HepG2 (cell line): ENCODE measurements at regions of chr18 and their contacts with region 1.

Region 1: DNA sequence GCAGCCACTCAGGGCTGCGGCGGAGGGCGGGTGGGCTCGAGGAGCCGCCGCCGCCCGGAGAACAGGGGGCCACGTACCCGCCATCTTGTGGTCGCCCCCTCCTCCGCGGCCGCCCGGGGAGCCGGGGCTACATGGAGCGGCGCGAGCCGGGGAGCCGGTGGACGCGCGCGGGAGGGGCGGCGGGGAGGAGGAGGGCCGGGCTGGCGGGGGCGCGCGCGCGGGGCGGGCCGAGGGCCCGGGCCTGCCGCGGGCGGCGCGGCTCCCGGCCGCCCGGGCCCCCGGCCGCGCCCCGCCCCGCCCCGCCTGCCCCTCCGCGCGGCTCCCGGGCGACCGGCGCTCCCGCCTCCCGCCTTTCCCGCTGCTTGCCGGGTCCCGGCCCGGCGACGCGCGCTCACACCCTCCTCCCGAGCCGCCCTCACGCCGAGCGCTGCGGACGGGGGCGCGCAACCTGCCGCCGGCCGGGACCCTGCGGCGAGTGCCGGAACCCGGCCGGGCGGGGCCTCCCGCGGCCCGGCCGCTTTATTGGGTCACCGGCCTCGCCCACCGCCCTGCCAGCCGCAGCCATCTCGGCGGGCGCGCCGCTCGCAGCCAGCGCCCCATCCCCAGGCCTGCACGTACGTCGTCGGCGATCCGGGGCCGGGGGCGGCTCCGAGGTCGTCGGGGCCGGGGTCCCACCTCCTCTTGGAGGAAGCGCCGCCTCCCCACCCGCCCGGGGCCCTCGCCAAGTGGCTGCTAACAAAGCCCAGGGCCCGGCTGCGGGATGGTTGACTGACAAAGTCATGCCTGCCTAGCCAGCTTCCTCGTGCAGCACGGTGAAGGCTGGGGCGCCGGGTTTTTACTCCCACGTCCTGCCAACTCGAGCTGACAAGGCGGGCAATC is at the start of gene PPP4R1:
- DNase-seq: peak; percentile 33
- ATAC-seq: peak; percentile 73
- H3K4me3 ChIP-seq: peak within 1 kb of the TSS; percentile 93 to 99 (median 94)
- H3K27ac ChIP-seq: peak within 1 kb of the TSS; percentile 81
- H3K4me1 ChIP-seq: peaks cover 59% of the 10 kb centered on the region
- H3K27me3 ChIP-seq: no peaks in the 10 kb centered on the region
- CTCF ChIP-seq: no peak
- EP300 ChIP-seq: no peak
- POLR2A ChIP-seq: peak; percentile 42 to 61
- RAD21 ChIP-seq: peak; percentile 49; the same call in 1 of the 2 replicates
- total RNA-seq, gene PPP4R1: 66.5 and 84.6 TPM in 2 replicates

Region 2: GRCh38 chr18:9673296-9674251 is 58.9 kb after region 1 on chr18:
- CTCF ChIA-PET with region 1: no interaction called
- POLR2A ChIA-PET with region 1: interaction called, 6 read pairs
- in situ Hi-C with region 1: loop called (anchors 10 kb)
- intact Hi-C with region 1: loop called (anchors 2 kb)
- DNase-seq: peak; percentile 86
- ATAC-seq: peak; percentile 89
- H3K4me3 ChIP-seq: peak overlapping the region; percentile 31 to 60 (median 34); a peak in 3 of 6 replicates
- H3K27ac ChIP-seq: peak overlapping the region; percentile 88
- H3K4me1 ChIP-seq: peaks cover 28% of the 10 kb centered on the region
- H3K27me3 ChIP-seq: 0 out of 5 replicates have a peak, but pooled peaks cover 0 to 6% of the 10 kb centered on the region in 2 experiments
- CTCF ChIP-seq: peak; percentile 72
- EP300 ChIP-seq: no peak
- POLR2A ChIP-seq: 0 out of 4 replicates have a peak, but pooled peaks of 1 of the 2 experiments have one; percentile 25
- RAD21 ChIP-seq: peak; percentile 52; the same call in 1 of the 2 replicates

Region 3: GRCh38 chr18:9722691-9723090 is 108.1 kb after region 1 on chr18:
- CTCF ChIA-PET with region 1: no interaction called
- POLR2A ChIA-PET with region 1: no interaction called
- in situ Hi-C with region 1: no loop called
- intact Hi-C with region 1: loop called (anchors 1 kb)
- DNase-seq: peak; percentile 37
- ATAC-seq: peak; percentile 73
- H3K4me3 ChIP-seq: no peak overlapping the region
- H3K27ac ChIP-seq: no peak overlapping the region
- H3K4me1 ChIP-seq: no peaks in the 10 kb centered on the region
- H3K27me3 ChIP-seq: no peaks in the 10 kb centered on the region
- CTCF ChIP-seq: peak; percentile 63
- EP300 ChIP-seq: no peak
- POLR2A ChIP-seq: no peak
- RAD21 ChIP-seq: 0 out of 2 replicates have a peak, but pooled peaks have one; percentile 18

Region 4: GRCh38 chr18:9734189-9734588 is 119.5 kb after region 1 on chr18:
- CTCF ChIA-PET with region 1: no interaction called
- POLR2A ChIA-PET with region 1: no interaction called
- in situ Hi-C with region 1: no loop called
- intact Hi-C with region 1: loop called (anchors 1 kb)
- DNase-seq: peak; percentile 70
- ATAC-seq: peak; percentile 89
- H3K4me3 ChIP-seq: peak overlapping the region; percentile 45 to 64 (median 53); a peak in 5 of 6 replicates
- H3K27ac ChIP-seq: peak overlapping the region; percentile 58
- H3K4me1 ChIP-seq: peaks cover 24% of the 10 kb centered on the region
- H3K27me3 ChIP-seq: no peaks in the 10 kb centered on the region; a peak in 1 of 5 replicates
- CTCF ChIP-seq: no peak; the same call in 1 of the 2 replicates
- EP300 ChIP-seq: no peak
- POLR2A ChIP-seq: no peak
- RAD21 ChIP-seq: no peak